Right ventricle myocardium superior (tissue), 1 donor: ENCODE measurements at regions of chr16 and their contacts with region 1.

Region 1: DNA sequence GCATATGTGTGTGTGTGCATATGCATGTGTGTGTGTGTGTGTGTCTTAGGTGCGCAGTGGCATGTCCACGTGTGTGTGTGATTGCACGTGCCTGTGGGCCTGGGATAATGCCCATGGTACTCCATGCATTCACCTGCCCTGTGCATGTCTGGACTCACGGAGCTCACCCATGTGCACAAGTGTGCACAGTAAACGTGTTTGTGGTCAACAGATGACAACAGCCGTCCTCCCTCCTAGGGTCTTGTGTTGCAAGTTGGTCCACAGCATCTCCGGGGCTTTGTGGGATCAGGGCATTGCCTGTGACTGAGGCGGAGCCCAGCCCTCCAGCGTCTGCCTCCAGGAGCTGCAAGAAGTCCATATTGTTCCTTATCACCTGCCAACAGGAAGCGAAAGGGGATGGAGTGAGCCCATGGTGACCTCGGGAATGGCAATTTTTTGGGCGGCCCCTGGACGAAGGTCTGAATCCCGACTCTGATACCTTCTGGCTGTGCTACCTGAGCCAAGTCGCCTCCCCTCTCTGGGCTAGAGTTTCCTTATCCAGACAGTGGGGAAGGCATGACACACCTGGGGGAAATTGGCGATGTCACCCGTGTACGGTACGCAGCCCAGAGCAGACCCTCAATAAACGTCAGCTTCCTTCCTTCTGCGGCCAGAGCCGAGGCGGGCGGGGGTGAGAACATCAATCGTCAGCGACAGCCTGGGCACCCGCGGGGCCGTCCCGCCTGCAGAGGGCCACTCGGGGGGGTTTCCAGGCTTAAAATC is 47.6 kb downstream of the IL21R start:
- DNase-seq: peak; percentile 41
- ATAC-seq: no peak

Region 2: GRCh38 chr16:25838724-25839186 is 1610.9 kb before region 1 on chr16:
- intact Hi-C with region 1: loop called (anchors 10 kb)
- DNase-seq: no peak
- ATAC-seq: peak; percentile 46

Region 3: GRCh38 chr16:27515874-27516353 is 66.3 kb after region 1 on chr16:
- intact Hi-C with region 1: no loop called
- DNase-seq: peak; percentile 46
- ATAC-seq: peak; percentile 50